ENCODE measurements at regions of chr20 and their contacts with region 1.

Region 1: GRCh38 chr20:8424010-8424409 is 291.9 kb downstream of the PLCB1 start:
- DNase-seq: no peak
- ATAC-seq: no peak
- H3K4me3 ChIP-seq: no peak overlapping the region
- H3K27ac ChIP-seq: no peak overlapping the region
- H3K4me1 ChIP-seq: peaks cover 0 to 45% (median 6%) of the 10 kb centered on the region in 9 donors
- H3K27me3 ChIP-seq: no peaks in the 10 kb centered on the region
- CTCF ChIP-seq: no peak

Region 2: GRCh38 chr20:8361006-8361652 is 62.9 kb before region 1 on chr20:
- intact Hi-C with region 1: loop called in 1 of 10 experiments (anchors 10 kb)
- DNase-seq: no peak
- ATAC-seq: peak in 4 of 8 donors; percentile 26 to 88 (median 55)
- H3K4me3 ChIP-seq: no peak overlapping the region
- H3K27ac ChIP-seq: no peak overlapping the region
- H3K4me1 ChIP-seq: peaks cover 0 to 28% (median 11%) of the 10 kb centered on the region in 9 donors
- H3K27me3 ChIP-seq: no peaks in the 10 kb centered on the region
- CTCF ChIP-seq: peak in 5 of 9 donors; percentile 15 to 46 (median 31)